ENCODE measurements at regions of chr10 and their contacts with region 1.

Region 1: DNA sequence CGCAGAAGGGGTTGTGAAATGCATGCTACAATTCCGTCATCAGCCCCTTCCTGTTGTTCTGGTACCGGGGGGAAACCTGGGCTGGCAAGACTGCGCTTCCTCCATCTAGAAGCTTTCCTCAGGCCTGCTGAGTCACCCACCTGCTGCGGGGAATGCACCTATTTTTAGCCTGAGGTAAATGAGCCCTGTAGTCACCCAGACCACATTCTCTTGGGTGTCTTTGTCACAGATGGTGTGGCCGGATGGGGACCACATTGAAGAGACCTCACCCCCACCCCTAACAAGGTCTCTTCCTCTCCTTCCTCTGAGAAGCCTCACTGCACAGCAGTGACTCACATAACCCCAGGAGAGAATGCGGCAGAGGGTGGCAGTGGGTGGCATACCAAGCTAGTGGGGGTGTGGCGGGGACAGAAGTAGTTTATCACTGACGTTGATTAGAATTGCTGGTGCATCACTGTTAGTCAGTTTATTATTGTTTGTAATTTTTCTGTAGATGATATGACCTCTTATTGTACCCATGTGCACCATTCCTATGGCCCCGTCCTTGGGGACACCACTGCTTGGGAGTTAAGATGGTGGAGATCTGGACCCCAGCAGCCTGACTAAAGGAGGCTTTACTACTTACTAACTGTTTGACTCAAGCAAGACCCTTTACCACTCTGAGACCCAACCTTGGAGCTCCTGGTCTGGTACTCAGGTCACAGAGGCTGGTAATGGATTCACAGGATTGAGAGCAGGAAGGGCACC is 83.0 kb upstream of the DUSP5 start:
- DNase-seq: peak; percentile 96
- H3K4me3 ChIP-seq: peak overlapping the region; percentile 47
- H3K27ac ChIP-seq: peak overlapping the region; percentile 85
- H3K4me1 ChIP-seq: peaks cover 76% of the 10 kb centered on the region
- CTCF ChIP-seq: no peak

Region 2: GRCh38 chr10:110311357-110311949 is 103.3 kb before region 1 on chr10:
- CTCF ChIA-PET with region 1: no interaction called
- POLR2A ChIA-PET with region 1: interaction called, 3 read pairs
- intact Hi-C with region 1: loop called (anchors 2 kb)
- DNase-seq: peak; percentile 77
- H3K4me3 ChIP-seq: no peak overlapping the region
- H3K27ac ChIP-seq: no peak overlapping the region
- H3K4me1 ChIP-seq: peaks cover 36% of the 10 kb centered on the region
- CTCF ChIP-seq: peak; percentile 93

Region 3: GRCh38 chr10:110404413-110404812 is 10.3 kb before region 1 on chr10:
- CTCF ChIA-PET with region 1: no interaction called
- POLR2A ChIA-PET with region 1: interaction called, 10 read pairs
- intact Hi-C with region 1: no loop called
- DNase-seq: no peak
- H3K4me3 ChIP-seq: no peak overlapping the region
- H3K27ac ChIP-seq: no peak overlapping the region
- H3K4me1 ChIP-seq: peaks cover 26% of the 10 kb centered on the region
- CTCF ChIP-seq: no peak

Region 4: GRCh38 chr10:110446954-110447608 is 32.3 kb after region 1 on chr10:
- CTCF ChIA-PET with region 1: no interaction called
- POLR2A ChIA-PET with region 1: interaction called, 20 read pairs
- intact Hi-C with region 1: loop called (anchors 2 kb)
- DNase-seq: no peak
- H3K4me3 ChIP-seq: no peak overlapping the region
- H3K27ac ChIP-seq: no peak overlapping the region
- H3K4me1 ChIP-seq: peaks cover 7% of the 10 kb centered on the region
- CTCF ChIP-seq: no peak

Region 5: GRCh38 chr10:110497438-110498086 is 82.8 kb after region 1 on chr10 and contains the start of gene DUSP5:
- CTCF ChIA-PET with region 1: no interaction called
- POLR2A ChIA-PET with region 1: interaction called, 4 read pairs
- intact Hi-C with region 1: loop called (anchors 1 kb)
- DNase-seq: peak; percentile 96
- H3K4me3 ChIP-seq: peak within 1 kb of the TSS; percentile 70
- H3K27ac ChIP-seq: no peak within 1 kb of the TSS
- H3K4me1 ChIP-seq: peaks cover 36% of the 10 kb centered on the region
- CTCF ChIP-seq: no peak
- total RNA-seq, gene DUSP5: 0.06 and 0.08 TPM in 2 replicates

Region 6: GRCh38 chr10:110547139-110547761 is 132.5 kb after region 1 on chr10:
- CTCF ChIA-PET with region 1: interaction called, 3 read pairs
- POLR2A ChIA-PET with region 1: interaction called, 3 read pairs
- intact Hi-C with region 1: loop called (anchors 1 kb)
- DNase-seq: peak; percentile 86
- H3K4me3 ChIP-seq: no peak overlapping the region
- H3K27ac ChIP-seq: no peak overlapping the region
- H3K4me1 ChIP-seq: peaks cover 15% of the 10 kb centered on the region
- CTCF ChIP-seq: peak; percentile 98

Measured in OCI-LY7 (cell line).